Adrenal gland (tissue), 19 donors: ENCODE measurements at regions of chr6 and their contacts with region 1.

Region 1: GRCh38 chr6:43758617-43759050 is 11.4 kb upstream of the VEGFA start:
- DNase-seq: no peak
- H3K4me3 ChIP-seq: no peak overlapping the region
- H3K27ac ChIP-seq: no peak overlapping the region
- H3K4me1 ChIP-seq: peaks cover 5 to 6% of the 10 kb centered on the region in 2 donors
- H3K27me3 ChIP-seq: no peaks in the 10 kb centered on the region
- CTCF ChIP-seq: peak; percentile 31 to 62 (median 57)
- POLR2A ChIP-seq: no peak

Region 2: GRCh38 chr6:43951063-43951755 is 192.6 kb after region 1 on chr6:
- intact Hi-C with region 1: loop called in 1 of 2 experiments (anchors 5 kb)
- DNase-seq: peak; percentile 73 to 85 (median 81)
- H3K4me3 ChIP-seq: no peak overlapping the region
- H3K27ac ChIP-seq: peak overlapping the region in 2 of 5 donors; percentile 56 to 87
- H3K4me1 ChIP-seq: peaks cover 10 to 24% of the 10 kb centered on the region in 2 donors
- H3K27me3 ChIP-seq: no peaks in the 10 kb centered on the region
- CTCF ChIP-seq: peak; percentile 41 to 78 (median 68)
- POLR2A ChIP-seq: no peak